ENCODE measurements at regions of chr16 and their contacts with region 1.

Region 1: DNA sequence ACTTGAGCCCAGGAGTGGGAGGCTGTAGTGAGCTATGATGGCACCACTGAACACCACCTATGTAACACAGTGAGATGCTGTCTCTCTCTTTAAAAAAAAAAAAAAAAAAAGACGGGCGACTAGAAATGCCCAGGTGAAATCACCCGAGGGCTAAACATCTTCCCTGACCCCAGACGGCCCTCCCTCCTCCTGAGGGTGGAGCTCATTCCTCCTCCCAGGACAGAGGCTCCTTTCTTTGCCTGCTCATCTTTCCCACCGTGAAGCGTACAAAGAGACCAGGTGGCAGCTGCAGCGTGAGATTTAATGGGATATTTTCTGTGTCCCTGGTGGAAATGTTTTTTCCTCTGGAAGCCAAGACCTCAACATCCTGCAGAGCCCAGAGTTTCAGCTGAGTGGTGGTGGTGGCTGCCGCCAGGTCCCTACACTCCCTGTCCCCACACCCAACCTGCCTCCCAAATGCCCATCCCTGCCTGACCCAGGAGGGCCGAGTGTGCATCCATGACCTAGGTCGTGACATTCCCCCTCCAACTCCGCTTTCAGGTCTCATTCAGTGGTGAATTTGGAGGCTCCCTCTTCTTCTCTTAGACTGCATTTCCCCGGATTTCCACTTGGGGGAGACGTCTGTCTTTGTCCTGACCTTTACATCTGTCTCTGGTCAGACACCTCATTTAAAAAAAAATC is 14.4 kb upstream of the GPRC5B start:
- DNase-seq: peak; percentile 64
- H3K4me3 ChIP-seq: no peak overlapping the region
- H3K27ac ChIP-seq: no peak overlapping the region
- H3K4me1 ChIP-seq: no peaks in the 10 kb centered on the region
- H3K27me3 ChIP-seq: no peaks in the 10 kb centered on the region
- CTCF ChIP-seq: peak; percentile 82

Region 2: GRCh38 chr16:19748389-19749168 is 150.5 kb before region 1 on chr16:
- CTCF ChIA-PET with region 1: no interaction called
- POLR2A ChIA-PET with region 1: interaction called, 12 read pairs
- intact Hi-C with region 1: no loop called
- DNase-seq: peak; percentile 44
- H3K4me3 ChIP-seq: no peak overlapping the region
- H3K27ac ChIP-seq: no peak overlapping the region
- H3K4me1 ChIP-seq: peaks cover 9% of the 10 kb centered on the region
- H3K27me3 ChIP-seq: no peaks in the 10 kb centered on the region
- CTCF ChIP-seq: no peak